K562 (cell line): ENCODE measurements at regions of chr2 and their contacts with region 1.

Region 1: GRCh38 chr2:31835450-31835849 is 175.4 kb downstream of the MEMO1 start:
- DNase-seq: no peak
- ATAC-seq: no peak
- H3K4me3 ChIP-seq: no peak overlapping the region
- H3K27ac ChIP-seq: no peak overlapping the region
- H3K4me1 ChIP-seq: no peaks in the 10 kb centered on the region
- H3K27me3 ChIP-seq: no peaks in the 10 kb centered on the region
- CTCF ChIP-seq: no peak
- EP300 ChIP-seq: no peak
- POLR2A ChIP-seq: no peak
- RAD21 ChIP-seq: no peak

Region 2: GRCh38 chr2:30956995-30957394 is 878.5 kb before region 1 on chr2:
- CTCF ChIA-PET with region 1: no interaction called
- POLR2A ChIA-PET with region 1: no interaction called
- in situ Hi-C with region 1: no loop called
- intact Hi-C with region 1: no loop called
- DNase-seq: no peak
- ATAC-seq: no peak
- H3K4me3 ChIP-seq: no peak overlapping the region
- H3K27ac ChIP-seq: no peak overlapping the region
- H3K4me1 ChIP-seq: no peaks in the 10 kb centered on the region
- H3K27me3 ChIP-seq: peaks cover 2 to 44% of the 10 kb centered on the region in 2 experiments; a peak in 4 of 5 replicates
- CTCF ChIP-seq: no peak
- EP300 ChIP-seq: no peak
- POLR2A ChIP-seq: no peak
- RAD21 ChIP-seq: no peak

Region 3: DNA sequence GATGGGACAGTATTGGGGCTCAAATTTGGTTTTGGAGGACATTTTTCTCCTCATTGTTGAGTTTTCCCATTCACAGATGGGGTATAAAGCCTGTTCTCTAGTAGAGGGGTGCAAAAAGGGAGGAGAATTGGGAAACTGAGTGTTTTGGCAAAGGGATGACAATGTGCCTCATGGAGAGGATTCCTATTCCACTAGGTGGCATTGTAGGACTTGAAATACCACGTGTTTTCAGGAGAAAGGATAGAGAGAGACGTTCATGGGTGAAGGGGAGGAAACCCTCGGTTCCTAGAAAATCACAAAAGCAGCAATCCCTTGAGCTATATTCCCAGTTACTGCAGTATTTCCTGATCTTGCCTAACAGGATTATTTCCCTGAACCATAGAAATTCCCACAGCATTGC is 141.0 kb before region 1 on chr2:
- CTCF ChIA-PET with region 1: no interaction called
- POLR2A ChIA-PET with region 1: no interaction called
- in situ Hi-C with region 1: no loop called
- intact Hi-C with region 1: loop called (anchors 5 kb)
- DNase-seq: peak in 2 of 4 experiments; percentile 19 to 35
- ATAC-seq: peak; percentile 56; the same call in 2 of the 3 replicates
- H3K4me3 ChIP-seq: no peak overlapping the region
- H3K27ac ChIP-seq: no peak overlapping the region
- H3K4me1 ChIP-seq: no peaks in the 10 kb centered on the region
- H3K27me3 ChIP-seq: no peaks in the 10 kb centered on the region
- CTCF ChIP-seq: peak; percentile 37 to 53 (median 44)
- EP300 ChIP-seq: no peak
- POLR2A ChIP-seq: no peak
- RAD21 ChIP-seq: peak; percentile 44 to 71; a peak in 3 of 4 replicates

Region 4: GRCh38 chr2:32063310-32064161 is 228.1 kb after region 1 on chr2 and contains the start of gene SPAST:
- CTCF ChIA-PET with region 1: no interaction called
- POLR2A ChIA-PET with region 1: no interaction called
- in situ Hi-C with region 1: no loop called
- intact Hi-C with region 1: no loop called
- DNase-seq: peak; percentile 96 to 98 (median 96)
- ATAC-seq: peak; percentile 94
- H3K4me3 ChIP-seq: peak within 1 kb of the TSS; percentile 96
- H3K27ac ChIP-seq: peak within 1 kb of the TSS; percentile 89
- H3K4me1 ChIP-seq: peaks cover 3 to 38% of the 10 kb centered on the region in 2 experiments; a peak in 4 of 5 replicates
- H3K27me3 ChIP-seq: no peaks in the 10 kb centered on the region
- CTCF ChIP-seq: peak; percentile 46 to 69 (median 53); a peak in 5 of 6 replicates
- EP300 ChIP-seq: peak; percentile 14; the same call in 1 of the 2 replicates
- POLR2A ChIP-seq: peak; percentile 81
- RAD21 ChIP-seq: peak in 1 of 2 experiments; percentile 20; a peak in 1 of 4 replicates
- polyA plus RNA-seq, gene SPAST: 7.4 to 12.6 TPM

Region 5: DNA sequence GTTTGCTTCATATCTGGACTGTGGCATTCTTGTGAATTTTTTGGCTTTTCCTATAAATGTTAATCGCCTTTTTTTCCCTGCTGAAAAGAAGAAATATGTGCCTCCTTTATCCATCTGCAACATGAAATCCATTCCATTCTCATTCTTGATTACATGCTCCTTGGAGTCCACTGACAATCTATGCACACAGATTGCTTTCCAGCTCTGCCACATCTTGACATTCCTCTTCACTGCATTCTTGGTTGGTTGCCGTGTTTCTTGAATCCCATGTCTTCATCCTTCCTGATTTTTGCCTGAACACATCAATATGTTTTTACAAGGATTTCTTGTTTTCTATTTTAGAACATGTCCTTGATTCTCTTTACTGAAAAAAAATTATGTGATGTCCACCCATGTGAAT is 494.7 kb after region 1 on chr2:
- CTCF ChIA-PET with region 1: no interaction called
- POLR2A ChIA-PET with region 1: no interaction called
- in situ Hi-C with region 1: loop called (anchors 10 kb)
- intact Hi-C with region 1: no loop called
- DNase-seq: no peak
- ATAC-seq: no peak
- H3K4me3 ChIP-seq: no peak overlapping the region
- H3K27ac ChIP-seq: no peak overlapping the region
- H3K4me1 ChIP-seq: peaks cover 0 to 3% of the 10 kb centered on the region in 2 experiments; a peak in 2 of 5 replicates
- H3K27me3 ChIP-seq: no peaks in the 10 kb centered on the region
- CTCF ChIP-seq: no peak
- EP300 ChIP-seq: no peak
- POLR2A ChIP-seq: no peak
- RAD21 ChIP-seq: no peak

Region 6: DNA sequence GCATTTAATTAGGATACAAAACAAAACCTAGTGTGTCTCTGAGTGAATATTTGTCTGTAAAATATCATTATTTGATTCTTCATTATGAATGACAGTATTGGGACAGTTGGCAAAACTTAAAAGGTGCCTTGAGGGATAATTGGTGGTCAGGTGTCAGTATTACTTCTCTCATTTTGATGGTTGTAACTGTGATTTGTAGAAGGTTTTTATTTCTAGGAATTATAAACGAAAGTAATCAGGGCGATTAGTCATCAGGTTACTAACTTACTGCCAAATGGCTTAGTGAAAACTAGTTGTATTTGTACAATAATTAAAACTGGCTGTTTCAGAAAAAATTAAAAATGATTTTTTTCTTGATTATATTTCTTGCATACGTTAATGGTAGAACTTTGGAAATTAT is 638.9 kb after region 1 on chr2:
- CTCF ChIA-PET with region 1: no interaction called
- POLR2A ChIA-PET with region 1: no interaction called
- in situ Hi-C with region 1: no loop called
- intact Hi-C with region 1: no loop called
- DNase-seq: no peak
- ATAC-seq: no peak
- H3K4me3 ChIP-seq: no peak overlapping the region
- H3K27ac ChIP-seq: no peak overlapping the region
- H3K4me1 ChIP-seq: peaks cover 0 to 2% of the 10 kb centered on the region in 2 experiments; a peak in 1 of 5 replicates
- H3K27me3 ChIP-seq: no peaks in the 10 kb centered on the region
- CTCF ChIP-seq: no peak
- EP300 ChIP-seq: no peak
- POLR2A ChIP-seq: no peak
- RAD21 ChIP-seq: no peak